Thyroid gland (tissue), 4 donors: ENCODE measurements at regions of chr1 and their contacts with region 1.

Region 1: DNA sequence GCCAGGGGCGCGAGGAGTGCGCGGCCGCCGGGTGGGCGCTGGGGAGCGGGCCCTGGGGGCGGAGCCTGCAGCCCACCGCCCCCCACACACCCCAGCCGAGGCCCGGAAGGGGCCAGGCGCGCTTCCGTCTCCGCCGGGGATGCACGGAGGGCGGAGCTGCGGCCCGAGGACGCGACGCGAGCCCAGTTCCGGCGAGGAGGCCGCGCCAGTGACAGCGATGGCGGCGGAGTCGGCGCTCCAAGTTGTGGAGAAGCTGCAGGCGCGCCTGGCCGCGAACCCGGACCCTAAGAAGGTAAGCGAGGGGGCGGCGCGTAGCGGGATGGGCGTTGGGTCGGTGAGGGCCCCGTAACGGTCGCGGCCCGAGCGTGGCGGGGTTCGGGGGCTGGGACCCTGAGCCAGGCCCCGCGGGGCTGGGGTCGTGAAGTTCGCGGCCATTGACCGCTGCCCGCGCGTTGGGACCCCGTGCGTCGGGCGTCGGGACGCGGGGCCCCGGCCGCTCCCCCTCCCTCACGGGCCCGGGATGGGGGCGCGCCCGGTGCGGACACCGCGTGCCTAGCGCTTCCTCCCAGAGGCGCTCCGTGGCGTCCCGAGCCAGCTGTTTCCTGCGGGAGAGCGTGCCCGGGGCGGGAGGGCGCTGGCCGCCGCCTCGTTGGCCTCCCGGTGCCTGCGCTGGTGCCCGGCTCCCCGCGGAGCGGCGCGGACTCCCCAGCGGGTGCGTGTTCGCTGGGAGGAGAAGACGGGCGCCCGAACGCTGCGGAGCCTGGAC is at the start of gene ELOA:
- DNase-seq: peak; percentile 75 to 80
- H3K4me3 ChIP-seq: peak within 1 kb of the TSS; percentile 70 to 98 (median 96)
- H3K27ac ChIP-seq: peak within 1 kb of the TSS; percentile 88 to 90 (median 88)
- H3K4me1 ChIP-seq: peaks cover 15 to 33% of the 10 kb centered on the region in 2 donors
- H3K27me3 ChIP-seq: no peaks in the 10 kb centered on the region
- CTCF ChIP-seq: no peak
- POLR2A ChIP-seq: peak; percentile 41 to 92
- total RNA-seq, gene ELOA: 33.3 to 49.9 (median 40.5) TPM

Region 2: GRCh38 chr1:23627069-23627735 is 116.3 kb before region 1 on chr1:
- intact Hi-C with region 1: no loop called
- DNase-seq: peak; percentile 89 to 91
- H3K4me3 ChIP-seq: peak overlapping the region in 1 of 3 donors; percentile 19
- H3K27ac ChIP-seq: peak overlapping the region; percentile 78 to 88 (median 79)
- H3K4me1 ChIP-seq: peaks cover 4 to 5% of the 10 kb centered on the region in 2 donors
- H3K27me3 ChIP-seq: no peaks in the 10 kb centered on the region
- CTCF ChIP-seq: no peak
- POLR2A ChIP-seq: peak in 1 of 2 donors; percentile 66

Region 3: GRCh38 chr1:23691499-23692307 is 51.8 kb before region 1 on chr1 and contains the start of gene RPL11:
- intact Hi-C with region 1: loop called (anchors 10 kb)
- DNase-seq: peak; percentile 94 to 96
- H3K4me3 ChIP-seq: peak within 1 kb of the TSS; percentile 33 to 79 (median 66)
- H3K27ac ChIP-seq: peak within 1 kb of the TSS; percentile 73 to 99 (median 90)
- H3K4me1 ChIP-seq: peaks cover 10 to 24% of the 10 kb centered on the region in 2 donors
- H3K27me3 ChIP-seq: no peaks in the 10 kb centered on the region
- CTCF ChIP-seq: peak; percentile 55 to 94 (median 84)
- POLR2A ChIP-seq: peak in 1 of 2 donors; percentile 77
- total RNA-seq, gene RPL11: 669 to 1,720 (median 801) TPM

Region 4: DNA sequence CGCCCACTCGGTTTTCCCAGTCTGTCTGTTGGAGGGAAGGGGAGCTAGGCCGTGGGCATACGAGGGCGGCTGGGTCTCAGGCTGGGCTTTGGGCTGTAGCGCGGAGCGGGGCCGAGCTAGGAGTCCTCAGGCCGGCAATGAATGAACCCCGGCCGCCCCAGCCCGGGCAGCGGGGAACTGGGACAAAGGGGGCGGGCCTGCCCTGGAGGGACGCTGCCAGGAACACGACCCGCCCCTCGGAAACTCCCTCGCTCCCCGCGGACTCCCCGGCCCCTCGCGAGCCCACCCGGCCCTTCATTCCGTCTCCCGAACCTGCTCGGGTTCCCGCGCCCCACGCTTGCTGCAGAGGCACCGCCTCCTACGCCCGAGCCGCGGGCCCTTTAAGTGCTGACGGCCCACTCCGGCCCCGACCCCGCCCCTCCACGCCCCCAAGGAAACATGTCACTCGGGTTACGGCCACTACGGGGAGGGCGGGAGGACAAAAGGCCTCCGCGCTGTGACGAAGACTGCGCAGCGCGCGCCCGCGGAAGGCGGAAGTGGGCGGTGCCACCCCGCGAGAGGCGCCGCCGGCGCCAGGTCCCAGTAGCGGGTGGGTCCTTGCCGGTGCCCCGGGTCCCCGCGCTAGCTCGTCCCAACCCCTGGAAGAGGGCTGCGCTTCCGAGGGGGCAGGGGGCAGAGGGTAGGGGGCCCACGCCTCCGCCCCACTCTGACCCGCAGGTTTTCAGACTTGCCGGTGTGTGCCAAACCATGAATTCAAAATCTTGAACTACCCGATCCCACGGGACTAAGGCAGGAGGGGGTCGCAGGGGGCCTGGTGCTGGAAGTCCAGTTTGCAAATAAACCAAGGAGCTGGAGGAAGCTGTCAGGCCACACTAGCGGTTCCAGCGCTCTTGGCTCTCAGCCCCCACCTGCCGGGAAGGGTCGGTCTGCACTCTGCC is 57.2 kb after region 1 on chr1 and contains the start of gene GALE:
- intact Hi-C with region 1: no loop called
- DNase-seq: peak; percentile 97 to 98
- H3K4me3 ChIP-seq: peak within 1 kb of the TSS; percentile 68 to 91 (median 70)
- H3K27ac ChIP-seq: peak within 1 kb of the TSS; percentile 59 to 89 (median 73)
- H3K4me1 ChIP-seq: peaks cover 8 to 20% of the 10 kb centered on the region in 2 donors
- H3K27me3 ChIP-seq: no peaks in the 10 kb centered on the region
- CTCF ChIP-seq: peak in 1 of 6 experiments; percentile 17
- POLR2A ChIP-seq: peak in 1 of 2 donors; percentile 74
- total RNA-seq, gene GALE: 4.6 to 12.6 (median 8.4) TPM